Calu3 (cell line): ENCODE measurements at regions of chr5 and their contacts with region 1.

Region 1: DNA sequence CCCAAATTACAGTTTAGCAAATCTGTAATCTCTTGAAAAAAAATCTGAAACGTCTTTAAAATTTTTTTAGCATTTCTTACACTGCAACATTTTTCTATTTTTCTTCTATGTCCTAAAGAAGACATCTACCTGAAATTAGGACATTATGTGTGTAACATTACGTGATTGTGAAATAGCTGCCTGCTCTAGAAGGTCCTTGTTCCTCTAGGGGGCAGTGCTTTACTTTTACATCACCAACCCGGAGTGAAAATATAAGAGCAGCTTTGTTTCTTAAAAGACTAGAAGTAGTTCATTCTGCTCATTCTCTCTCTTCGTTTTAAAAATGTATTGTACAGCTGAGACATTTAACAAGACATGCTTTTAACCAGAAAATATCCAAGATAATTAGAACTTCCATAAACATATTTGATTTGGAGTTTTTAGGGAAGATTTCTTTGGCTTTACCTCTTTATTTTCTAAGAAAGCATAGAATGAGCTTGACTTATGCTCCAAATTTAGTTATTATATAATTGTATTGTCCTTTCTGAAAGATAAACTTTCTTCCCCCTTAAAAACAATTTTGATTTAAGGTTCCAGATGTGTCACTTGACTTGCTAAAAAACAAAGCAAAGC is 48.1 kb upstream of the RIOK2 start:
- DNase-seq: peak; percentile 62
- H3K4me3 Mint-ChIP-seq: no peak overlapping the region
- H3K27ac Mint-ChIP-seq: no peak overlapping the region
- H3K4me1 Mint-ChIP-seq: peaks cover 24% of the 10 kb centered on the region
- H3K27me3 Mint-ChIP-seq: no peaks in the 10 kb centered on the region
- CTCF ChIP-seq: peak; percentile 62

Region 2: GRCh38 chr5:96885518-96886338 is 345.4 kb before region 1 on chr5:
- CTCF ChIA-PET with region 1: no interaction called
- intact Hi-C with region 1: no loop called
- DNase-seq: no peak
- H3K4me3 Mint-ChIP-seq: no peak overlapping the region
- H3K27ac Mint-ChIP-seq: no peak overlapping the region
- H3K4me1 Mint-ChIP-seq: peaks cover 20% of the 10 kb centered on the region
- H3K27me3 Mint-ChIP-seq: no peaks in the 10 kb centered on the region
- CTCF ChIP-seq: no peak

Region 3: DNA sequence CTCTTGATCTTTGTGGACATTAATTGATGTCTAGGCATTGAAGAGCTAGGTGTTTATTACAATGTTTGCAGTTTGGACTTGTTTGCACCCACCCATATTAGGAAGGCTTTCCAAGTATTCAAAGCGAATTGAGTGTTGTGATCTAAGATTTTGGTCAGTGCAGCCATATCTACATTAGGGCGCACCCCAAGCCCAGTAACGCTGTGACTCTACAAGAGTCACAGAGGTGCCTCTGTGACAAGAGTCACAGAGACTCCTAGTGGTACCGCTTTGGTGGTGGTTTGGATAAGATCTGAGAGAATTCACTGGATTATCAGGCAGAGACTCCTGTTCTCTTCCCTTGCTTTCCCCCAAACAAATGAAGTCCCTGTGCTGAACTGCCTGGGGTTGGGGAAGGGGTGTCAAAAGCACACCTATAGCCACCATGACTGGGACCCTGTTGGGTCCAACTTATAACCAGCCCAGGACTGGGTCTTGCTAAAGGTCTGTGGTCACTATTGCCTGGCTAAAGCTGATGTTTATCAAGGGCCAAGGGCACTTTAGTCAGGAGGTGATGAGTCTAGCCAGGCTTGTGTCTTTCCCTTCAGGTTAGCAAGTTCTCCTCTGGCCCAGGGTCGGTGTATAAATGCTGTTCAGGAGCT is 66.1 kb after region 1 on chr5:
- CTCF ChIA-PET with region 1: no interaction called
- intact Hi-C with region 1: loop called (anchors 1 kb)
- DNase-seq: peak; percentile 63
- H3K4me3 Mint-ChIP-seq: no peak overlapping the region
- H3K27ac Mint-ChIP-seq: no peak overlapping the region
- H3K4me1 Mint-ChIP-seq: no peaks in the 10 kb centered on the region
- H3K27me3 Mint-ChIP-seq: no peaks in the 10 kb centered on the region
- CTCF ChIP-seq: peak; percentile 59

Region 4: DNA sequence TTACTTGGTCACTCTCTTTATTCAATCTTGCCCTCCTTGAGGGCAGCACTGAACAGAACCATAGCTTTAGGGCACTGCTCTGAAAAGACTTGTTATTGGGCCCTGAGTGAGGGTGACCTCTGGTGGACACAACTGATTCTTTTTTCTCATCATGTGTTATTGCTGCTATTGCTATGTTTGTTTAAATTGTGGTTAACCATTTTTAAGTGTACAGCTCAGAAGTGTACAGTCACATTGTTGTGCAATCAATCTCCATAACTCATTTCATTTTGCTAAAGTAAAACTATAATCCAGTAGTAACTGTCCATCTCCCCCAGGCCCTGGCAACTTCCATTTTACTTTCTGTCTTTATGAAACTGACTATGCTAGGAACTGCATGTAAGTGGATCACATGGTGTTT is 303.0 kb after region 1 on chr5:
- CTCF ChIA-PET with region 1: interaction called, 33 read pairs
- intact Hi-C with region 1: loop called (anchors 1 kb)
- DNase-seq: peak; percentile 60
- H3K4me3 Mint-ChIP-seq: no peak overlapping the region
- H3K27ac Mint-ChIP-seq: no peak overlapping the region
- H3K4me1 Mint-ChIP-seq: peaks cover 23% of the 10 kb centered on the region
- H3K27me3 Mint-ChIP-seq: no peaks in the 10 kb centered on the region
- CTCF ChIP-seq: peak; percentile 56

Region 5: GRCh38 chr5:97726106-97726505 is 495.0 kb after region 1 on chr5:
- CTCF ChIA-PET with region 1: no interaction called
- intact Hi-C with region 1: no loop called
- DNase-seq: no peak
- H3K4me3 Mint-ChIP-seq: no peak overlapping the region
- H3K27ac Mint-ChIP-seq: no peak overlapping the region
- H3K4me1 Mint-ChIP-seq: no peaks in the 10 kb centered on the region
- H3K27me3 Mint-ChIP-seq: no peaks in the 10 kb centered on the region
- CTCF ChIP-seq: no peak

Region 6: GRCh38 chr5:98768160-98769005 is 1537.3 kb after region 1 on chr5:
- CTCF ChIA-PET with region 1: no interaction called
- intact Hi-C with region 1: loop called (anchors 1 kb)
- DNase-seq: peak; percentile 74
- H3K4me3 Mint-ChIP-seq: peak overlapping the region; percentile 82
- H3K27ac Mint-ChIP-seq: peak overlapping the region; percentile 89
- H3K4me1 Mint-ChIP-seq: peaks cover 31% of the 10 kb centered on the region
- H3K27me3 Mint-ChIP-seq: no peaks in the 10 kb centered on the region
- CTCF ChIP-seq: peak; percentile 94

Region 7: GRCh38 chr5:98827161-98827560 is 1596.0 kb after region 1 on chr5:
- CTCF ChIA-PET with region 1: no interaction called
- intact Hi-C with region 1: loop called (anchors 5 kb)
- DNase-seq: peak; percentile 39
- H3K4me3 Mint-ChIP-seq: no peak overlapping the region
- H3K27ac Mint-ChIP-seq: no peak overlapping the region
- H3K4me1 Mint-ChIP-seq: no peaks in the 10 kb centered on the region
- H3K27me3 Mint-ChIP-seq: no peaks in the 10 kb centered on the region
- CTCF ChIP-seq: peak; percentile 29